ENCODE measurements at regions of chr12 and their contacts with region 1.

Region 1: DNA sequence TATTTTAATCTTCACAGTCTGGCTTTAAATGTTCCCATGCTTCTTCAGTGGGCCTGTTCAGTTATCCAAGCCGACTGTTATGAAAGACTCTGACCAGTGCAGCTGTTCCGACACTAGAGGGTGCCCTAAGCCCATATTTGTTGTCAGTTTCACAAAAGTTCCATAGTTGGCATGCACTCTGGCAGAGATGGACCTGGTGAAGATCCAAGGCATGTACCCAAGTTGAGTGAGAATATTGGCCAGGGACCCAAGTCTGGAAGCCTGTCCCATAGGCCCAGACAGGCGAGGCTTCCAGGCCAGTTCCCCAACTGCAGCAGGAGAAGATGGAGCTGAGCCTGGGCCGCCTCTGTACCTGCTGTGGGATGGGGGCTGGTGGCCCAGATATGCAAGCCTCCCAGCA is 27.4 kb upstream of the GUCY2C start:
- DNase-seq: peak; percentile 10 to 79 (median 56)
- ATAC-seq: peak; percentile 80
- H3K4me3 ChIP-seq: no peak overlapping the region
- H3K4me3 Mint-ChIP-seq: no peak overlapping the region
- H3K27ac ChIP-seq: no peak overlapping the region
- H3K27ac Mint-ChIP-seq: no peak overlapping the region
- H3K4me1 ChIP-seq: no peaks in the 10 kb centered on the region
- H3K4me1 Mint-ChIP-seq: no peaks in the 10 kb centered on the region
- H3K27me3 ChIP-seq: peaks cover 0 to 2% of the 10 kb centered on the region in 2 experiments
- H3K27me3 Mint-ChIP-seq: peaks cover 12% of the 10 kb centered on the region
- CTCF ChIP-seq: peak; percentile 77

Region 2: DNA sequence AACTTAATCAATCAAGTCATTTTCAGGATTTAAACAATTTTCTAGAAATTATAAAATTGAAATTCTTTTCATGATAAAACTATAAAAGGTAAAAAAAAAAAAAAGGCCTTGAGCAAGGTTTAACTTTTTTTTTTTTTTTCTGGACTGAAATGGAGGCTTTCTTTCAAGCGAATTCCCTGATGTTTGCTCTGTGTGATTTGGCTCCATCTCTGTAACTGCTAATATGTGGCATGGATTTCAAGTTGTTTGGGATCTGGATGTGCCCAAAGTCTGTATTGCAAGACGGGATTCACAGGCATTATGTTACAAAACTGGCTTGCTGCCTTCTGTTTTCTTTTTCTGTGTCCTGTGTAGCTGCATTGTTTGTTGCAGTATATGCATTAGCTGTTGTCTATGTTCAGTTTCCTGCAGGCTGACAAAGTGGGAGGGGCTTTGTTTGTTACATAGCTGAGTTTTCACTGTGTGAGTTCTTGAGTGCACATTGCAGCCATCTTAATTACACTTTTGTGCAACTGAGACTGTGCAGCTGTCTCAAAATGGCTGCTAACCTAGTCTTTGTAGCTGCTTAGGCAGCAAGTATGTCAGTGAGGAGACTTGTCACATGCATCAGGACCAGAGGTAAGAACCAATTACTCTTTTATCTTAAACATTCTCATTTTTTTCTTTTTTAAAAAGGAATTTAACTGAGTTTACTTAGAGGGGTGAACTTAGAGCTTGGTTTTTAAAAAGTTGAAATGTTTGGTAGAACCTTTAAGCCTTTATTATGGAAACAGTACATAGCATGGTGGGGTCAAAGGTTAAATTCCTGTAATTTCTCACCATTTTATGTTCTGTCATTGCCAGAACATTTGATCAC is 338.8 kb before region 1 on chr12:
- CTCF ChIA-PET with region 1: no interaction called
- POLR2A ChIA-PET with region 1: no interaction called
- intact Hi-C with region 1: no loop called
- DNase-seq: peak; percentile 23 to 92 (median 57)
- ATAC-seq: peak; percentile 90
- H3K4me3 ChIP-seq: peak overlapping the region; percentile 1 to 48
- H3K4me3 Mint-ChIP-seq: peak overlapping the region; percentile 60
- H3K27ac ChIP-seq: peak overlapping the region; percentile 56 to 59
- H3K27ac Mint-ChIP-seq: peak overlapping the region; percentile 80
- H3K4me1 ChIP-seq: peaks cover 54% of the 10 kb centered on the region
- H3K4me1 Mint-ChIP-seq: peaks cover 69% of the 10 kb centered on the region
- H3K27me3 ChIP-seq: no peaks in the 10 kb centered on the region
- H3K27me3 Mint-ChIP-seq: no peaks in the 10 kb centered on the region
- CTCF ChIP-seq: no peak

Region 3: GRCh38 chr12:14795028-14795448 is 71.3 kb after region 1 on chr12:
- CTCF ChIA-PET with region 1: interaction called, 8 read pairs
- POLR2A ChIA-PET with region 1: no interaction called
- intact Hi-C with region 1: loop called in 1 of 2 experiments (anchors 5 kb)
- DNase-seq: no peak
- ATAC-seq: no peak
- H3K4me3 ChIP-seq: no peak overlapping the region
- H3K4me3 Mint-ChIP-seq: no peak overlapping the region
- H3K27ac ChIP-seq: no peak overlapping the region
- H3K27ac Mint-ChIP-seq: no peak overlapping the region
- H3K4me1 ChIP-seq: no peaks in the 10 kb centered on the region
- H3K4me1 Mint-ChIP-seq: peaks cover 4% of the 10 kb centered on the region
- H3K27me3 ChIP-seq: no peaks in the 10 kb centered on the region
- H3K27me3 Mint-ChIP-seq: no peaks in the 10 kb centered on the region
- CTCF ChIP-seq: no peak

Region 4: GRCh38 chr12:14845350-14845750 is 121.6 kb after region 1 on chr12:
- CTCF ChIA-PET with region 1: interaction called, 8 read pairs
- POLR2A ChIA-PET with region 1: no interaction called
- intact Hi-C with region 1: loop called (anchors 1 to 2 kb)
- DNase-seq: peak; percentile 7 to 73 (median 39)
- ATAC-seq: peak; percentile 71
- H3K4me3 ChIP-seq: no peak overlapping the region
- H3K4me3 Mint-ChIP-seq: no peak overlapping the region
- H3K27ac ChIP-seq: no peak overlapping the region
- H3K27ac Mint-ChIP-seq: no peak overlapping the region
- H3K4me1 ChIP-seq: peaks cover 9% of the 10 kb centered on the region
- H3K4me1 Mint-ChIP-seq: peaks cover 8% of the 10 kb centered on the region
- H3K27me3 ChIP-seq: no peaks in the 10 kb centered on the region
- H3K27me3 Mint-ChIP-seq: no peaks in the 10 kb centered on the region
- CTCF ChIP-seq: peak; percentile 88

Region 5: DNA sequence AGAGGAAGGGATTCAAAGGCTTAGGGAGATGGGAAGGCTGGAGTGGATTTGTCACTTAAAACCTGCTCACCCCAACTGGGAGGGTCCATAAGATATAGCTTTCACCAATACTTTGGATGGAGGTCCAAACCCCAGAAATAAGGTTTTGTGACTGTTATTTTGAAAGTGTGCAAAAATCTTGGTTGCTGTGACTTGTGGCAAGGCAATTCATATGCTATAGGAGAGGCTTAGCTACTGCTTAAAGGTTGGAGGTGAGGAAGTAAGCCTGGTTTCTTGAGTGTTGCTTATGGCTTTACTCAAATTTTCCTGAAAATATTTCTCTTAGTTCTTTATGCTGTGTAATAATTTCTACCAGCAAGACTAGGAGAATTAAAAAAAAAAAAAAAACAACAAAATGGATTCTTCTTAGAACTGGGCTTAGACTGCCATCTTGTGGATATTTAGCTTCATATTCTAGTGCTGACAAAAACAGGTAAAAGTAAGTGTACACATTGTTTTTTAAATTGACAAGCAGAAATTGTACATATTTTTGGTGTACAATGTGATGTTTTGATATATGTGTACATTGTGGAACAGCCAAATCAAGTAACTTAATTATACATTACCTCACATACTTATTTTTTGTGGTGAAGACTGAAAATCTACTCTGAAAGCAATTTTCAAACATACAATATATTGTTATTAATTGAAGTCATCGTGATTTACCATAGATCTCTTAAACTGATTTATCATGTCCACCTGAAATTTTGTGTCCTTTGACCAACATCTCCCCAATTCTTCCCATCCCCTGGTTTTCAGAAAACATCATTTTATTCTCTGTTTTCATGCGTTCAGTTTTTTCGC is 272.0 kb after region 1 on chr12:
- CTCF ChIA-PET with region 1: interaction called, 24 read pairs
- POLR2A ChIA-PET with region 1: interaction called, 3 read pairs
- intact Hi-C with region 1: loop called (anchors 1 kb)
- DNase-seq: peak in 2 of 9 experiments; percentile 78 to 85
- ATAC-seq: peak; percentile 70
- H3K4me3 ChIP-seq: no peak overlapping the region
- H3K4me3 Mint-ChIP-seq: peak overlapping the region; percentile 20
- H3K27ac ChIP-seq: no peak overlapping the region
- H3K27ac Mint-ChIP-seq: peak overlapping the region; percentile 63
- H3K4me1 ChIP-seq: peaks cover 29% of the 10 kb centered on the region
- H3K4me1 Mint-ChIP-seq: peaks cover 31% of the 10 kb centered on the region
- H3K27me3 ChIP-seq: no peaks in the 10 kb centered on the region
- H3K27me3 Mint-ChIP-seq: peaks cover 2% of the 10 kb centered on the region
- CTCF ChIP-seq: peak; percentile 75

Region 6: DNA sequence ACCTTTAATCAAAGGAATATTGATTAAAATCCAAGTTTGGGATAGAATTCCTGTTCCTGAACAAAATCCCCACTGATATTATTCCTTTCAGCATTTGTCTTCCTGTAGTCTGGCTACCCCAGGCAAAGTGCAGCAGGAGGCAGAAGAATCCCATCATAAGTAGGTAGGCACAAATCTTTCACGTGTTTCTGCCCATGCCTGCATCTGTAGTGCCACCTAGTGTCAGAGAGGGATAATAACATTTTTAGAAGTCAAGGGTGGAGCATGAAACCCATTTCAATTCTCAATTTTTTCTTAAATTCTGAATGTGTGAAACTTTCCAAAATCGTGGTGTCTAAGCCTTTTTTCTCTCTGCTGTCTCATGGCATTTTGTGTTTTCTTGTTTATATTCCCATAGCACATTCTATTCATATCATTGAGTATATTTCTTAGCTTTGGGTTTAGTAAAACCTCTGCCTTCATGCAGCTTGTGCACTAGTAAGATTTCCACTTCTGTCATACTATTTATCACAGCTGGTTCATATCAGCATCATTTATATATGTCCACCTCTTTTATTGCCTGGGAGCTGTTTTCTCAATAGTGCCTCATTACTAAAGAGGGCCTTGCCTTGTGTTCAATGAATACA is 545.3 kb after region 1 on chr12:
- CTCF ChIA-PET with region 1: interaction called, 9 read pairs
- POLR2A ChIA-PET with region 1: no interaction called
- intact Hi-C with region 1: loop called (anchors 1 to 2 kb)
- DNase-seq: peak in 5 of 9 experiments; percentile 18 to 71 (median 27)
- ATAC-seq: peak; percentile 72
- H3K4me3 ChIP-seq: no peak overlapping the region
- H3K4me3 Mint-ChIP-seq: no peak overlapping the region
- H3K27ac ChIP-seq: no peak overlapping the region
- H3K27ac Mint-ChIP-seq: no peak overlapping the region
- H3K4me1 ChIP-seq: no peaks in the 10 kb centered on the region
- H3K4me1 Mint-ChIP-seq: no peaks in the 10 kb centered on the region
- H3K27me3 ChIP-seq: no peaks in the 10 kb centered on the region
- H3K27me3 Mint-ChIP-seq: peaks cover 5% of the 10 kb centered on the region
- CTCF ChIP-seq: peak; percentile 89

Region 7: DNA sequence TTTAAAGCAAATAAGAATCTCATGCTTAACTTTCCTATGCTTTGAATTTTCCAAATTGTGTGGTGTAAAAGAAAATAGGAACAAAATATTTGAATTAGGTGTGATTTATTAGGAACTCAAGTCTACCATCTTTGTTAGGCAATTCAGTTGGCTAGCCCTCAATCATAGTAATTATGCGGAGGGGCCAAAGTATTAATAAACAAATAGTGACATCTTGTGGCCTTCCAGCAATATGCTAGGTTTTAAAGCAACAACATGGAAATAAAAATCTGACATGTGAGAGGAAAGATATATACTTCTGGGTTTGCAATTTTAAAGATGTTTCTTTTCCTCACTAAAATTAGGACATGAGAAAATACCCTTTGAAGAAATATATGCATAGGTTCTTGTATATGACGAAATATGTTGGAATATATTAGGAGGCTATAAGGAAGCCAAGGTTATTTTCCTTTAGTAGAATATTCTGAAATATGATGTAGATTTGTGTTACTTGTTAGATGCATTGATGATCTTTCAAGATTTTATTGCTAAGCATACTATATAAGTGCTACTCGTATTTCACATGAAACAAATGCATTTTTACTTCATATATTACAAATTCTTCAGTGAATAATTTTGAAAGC is 798.9 kb after region 1 on chr12:
- CTCF ChIA-PET with region 1: no interaction called
- POLR2A ChIA-PET with region 1: no interaction called
- intact Hi-C with region 1: loop called in 1 of 2 experiments (anchors 10 kb)
- DNase-seq: peak in 2 of 9 experiments; percentile 19 to 24
- ATAC-seq: no peak
- H3K4me3 ChIP-seq: no peak overlapping the region
- H3K4me3 Mint-ChIP-seq: no peak overlapping the region
- H3K27ac ChIP-seq: no peak overlapping the region
- H3K27ac Mint-ChIP-seq: no peak overlapping the region
- H3K4me1 ChIP-seq: no peaks in the 10 kb centered on the region
- H3K4me1 Mint-ChIP-seq: peaks cover 2% of the 10 kb centered on the region
- H3K27me3 ChIP-seq: no peaks in the 10 kb centered on the region
- H3K27me3 Mint-ChIP-seq: peaks cover 30% of the 10 kb centered on the region
- CTCF ChIP-seq: no peak

Measured in CD8-positive, alpha-beta T cell (primary cell).